Mammary epithelial cell (primary cell): ENCODE measurements at regions of chr10 and their contacts with region 1.

Region 1: GRCh38 chr10:122323941-122324675 is 50.4 kb upstream of the PLEKHA1 start:
- DNase-seq: peak; percentile 91
- H3K4me3 ChIP-seq: no peak overlapping the region
- H3K27ac ChIP-seq: peak overlapping the region; percentile 53
- H3K4me1 ChIP-seq: peaks cover 23% of the 10 kb centered on the region
- H3K27me3 ChIP-seq: no peaks in the 10 kb centered on the region
- CTCF ChIP-seq: no peak

Region 2: GRCh38 chr10:122307669-122308486 is 16.2 kb before region 1 on chr10:
- CTCF ChIA-PET with region 1: no interaction called
- dilution Hi-C with region 1: no loop called
- in situ Hi-C with region 1: no loop called
- intact Hi-C with region 1: loop called (anchors 2 kb)
- DNase-seq: peak; percentile 93
- H3K4me3 ChIP-seq: peak overlapping the region in 1 of 3 experiments; percentile 38
- H3K27ac ChIP-seq: peak overlapping the region; percentile 96
- H3K4me1 ChIP-seq: peaks cover 21% of the 10 kb centered on the region
- H3K27me3 ChIP-seq: no peaks in the 10 kb centered on the region
- CTCF ChIP-seq: no peak